ENCODE measurements at regions of chr4 and their contacts with region 1.

Region 1: GRCh38 chr4:15396157-15396800 is 31.6 kb upstream of the C1QTNF7 start:
- H3K4me3 ChIP-seq: no peak overlapping the region
- H3K27ac ChIP-seq: no peak overlapping the region
- H3K4me1 ChIP-seq: no peaks in the 10 kb centered on the region
- CTCF ChIP-seq: 0 out of 2 replicates have a peak, but pooled peaks have one; percentile 36

Region 2: GRCh38 chr4:14800977-14801376 is 595.3 kb before region 1 on chr4:
- CTCF ChIA-PET with region 1: no interaction called
- POLR2A ChIA-PET with region 1: no interaction called
- H3K4me3 ChIP-seq: no peak overlapping the region
- H3K27ac ChIP-seq: no peak overlapping the region
- H3K4me1 ChIP-seq: no peaks in the 10 kb centered on the region
- CTCF ChIP-seq: no peak

Region 3: GRCh38 chr4:15385928-15386327 is 10.4 kb before region 1 on chr4:
- CTCF ChIA-PET with region 1: interaction called, 11 read pairs
- POLR2A ChIA-PET with region 1: no interaction called
- H3K4me3 ChIP-seq: no peak overlapping the region
- H3K27ac ChIP-seq: no peak overlapping the region
- H3K4me1 ChIP-seq: no peaks in the 10 kb centered on the region
- CTCF ChIP-seq: no peak